WTC11 (cell line): ENCODE measurements at regions of chr19 and their contacts with region 1.

Region 1: GRCh38 chr19:14405758-14406644 is 13.1 kb downstream of the DDX39A start:
- DNase-seq: peak; percentile 100
- ATAC-seq: peak; percentile 92
- H3K4me3 Mint-ChIP-seq: peak overlapping the region; percentile 81
- H3K27ac Mint-ChIP-seq: peak overlapping the region; percentile 98
- H3K4me1 Mint-ChIP-seq: peaks cover 14% of the 10 kb centered on the region
- H3K27me3 Mint-ChIP-seq: no peaks in the 10 kb centered on the region
- CTCF ChIP-seq: peak; percentile 83

Region 2: GRCh38 chr19:14142262-14143190 is 263.5 kb before region 1 on chr19:
- CTCF ChIA-PET with region 1: interaction called, 91 read pairs
- POLR2A ChIA-PET with region 1: no interaction called
- DNase-seq: no peak
- ATAC-seq: no peak
- H3K4me3 Mint-ChIP-seq: no peak overlapping the region
- H3K27ac Mint-ChIP-seq: no peak overlapping the region
- H3K4me1 Mint-ChIP-seq: peaks cover 9% of the 10 kb centered on the region; the same call in 1 of the 2 replicates
- H3K27me3 Mint-ChIP-seq: no peaks in the 10 kb centered on the region; the same call in 1 of the 2 replicates
- CTCF ChIP-seq: no peak

Region 3: DNA sequence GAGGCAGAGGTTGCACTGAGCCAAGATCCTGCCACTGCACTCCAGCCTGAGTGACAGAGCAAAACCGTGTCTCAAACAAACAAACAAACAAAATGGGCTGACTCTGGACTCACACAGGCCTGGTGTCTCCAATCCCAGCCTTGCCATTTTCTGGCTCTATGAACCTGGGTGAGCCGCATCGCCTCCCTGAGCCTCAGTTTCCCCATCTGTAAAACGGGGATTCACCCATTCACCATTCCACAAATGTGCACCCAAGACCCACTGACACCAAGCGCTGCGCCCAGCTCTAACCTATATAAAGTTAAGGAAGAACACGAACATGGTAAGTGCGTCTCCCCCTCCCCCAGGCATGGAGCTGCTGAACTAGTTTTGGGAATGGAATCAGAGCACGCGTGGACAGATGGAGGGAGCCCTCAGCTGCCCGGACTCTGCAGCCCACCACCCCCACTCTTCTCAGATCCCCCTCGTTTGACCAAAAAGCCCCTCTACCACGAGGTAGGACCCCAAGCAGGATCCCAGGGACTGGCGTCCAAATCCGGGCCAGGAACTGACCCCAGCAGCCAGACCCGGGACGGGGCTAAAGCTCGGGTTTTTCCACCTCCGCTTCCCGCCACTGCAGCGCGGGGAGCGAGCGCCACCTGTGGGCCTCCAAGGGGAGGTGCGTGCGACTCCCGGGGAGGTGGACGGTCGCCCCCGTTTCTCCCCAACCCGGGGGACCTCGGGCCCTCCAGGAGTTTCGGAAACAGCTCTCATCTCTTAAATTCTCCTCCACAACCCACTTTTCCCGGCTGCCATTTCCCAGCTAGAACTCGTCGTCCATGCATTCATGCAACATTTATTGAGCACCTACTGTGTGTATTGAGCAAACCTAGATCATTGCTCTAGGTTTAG is 57.8 kb before region 1 on chr19:
- CTCF ChIA-PET with region 1: interaction called, 103 read pairs
- POLR2A ChIA-PET with region 1: interaction called, 6 read pairs
- DNase-seq: peak; percentile 80
- ATAC-seq: peak; percentile 82
- H3K4me3 Mint-ChIP-seq: peak overlapping the region; percentile 45
- H3K27ac Mint-ChIP-seq: no peak overlapping the region
- H3K4me1 Mint-ChIP-seq: peaks cover under 1% of the 10 kb centered on the region
- H3K27me3 Mint-ChIP-seq: peaks cover 9% of the 10 kb centered on the region; the same call in 1 of the 2 replicates
- CTCF ChIP-seq: peak; percentile 93

Region 4: DNA sequence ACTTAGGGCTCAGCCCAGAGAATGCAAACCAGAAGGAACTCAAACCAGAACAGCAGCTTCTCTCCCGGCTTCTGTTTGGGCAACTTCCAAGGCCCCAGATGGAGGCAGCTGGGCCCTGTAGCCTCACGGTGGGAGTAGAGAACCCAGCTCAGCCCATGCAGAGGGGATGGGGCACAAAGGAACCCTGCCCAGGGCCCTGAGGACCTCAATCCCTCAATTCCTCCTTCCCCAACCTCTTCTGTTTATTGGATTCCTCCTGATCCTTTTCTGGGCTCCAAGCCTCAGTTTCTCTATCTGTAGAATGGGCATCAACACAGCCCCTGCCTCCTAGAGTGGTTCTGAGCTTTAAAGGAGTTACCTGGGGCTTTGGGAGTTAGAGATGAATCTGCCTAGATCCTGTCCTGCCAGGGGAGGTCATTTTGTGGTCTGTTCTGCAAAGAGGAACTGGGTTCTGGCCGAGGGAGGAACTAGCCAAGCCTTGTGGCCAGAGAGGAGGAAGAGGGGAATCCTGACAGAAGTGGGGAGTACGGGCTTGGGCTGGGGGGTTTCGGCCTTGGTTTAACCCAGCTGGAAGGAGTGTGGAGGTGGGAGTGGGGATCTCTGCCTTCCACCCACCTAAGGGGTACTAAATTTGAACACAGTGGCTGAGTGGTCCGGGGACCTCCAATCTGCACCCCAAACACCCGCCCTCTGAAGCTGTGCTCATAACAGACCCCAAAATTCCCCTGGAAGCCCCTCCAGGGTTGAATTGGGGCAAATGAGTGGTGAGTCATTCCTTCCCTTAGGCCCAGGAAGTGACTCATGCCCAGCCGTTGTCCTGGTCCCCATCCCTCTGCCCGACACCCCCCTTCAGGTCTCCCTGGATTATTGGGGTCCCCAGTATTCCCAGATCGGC is 22.1 kb before region 1 on chr19:
- CTCF ChIA-PET with region 1: interaction called, 38 read pairs
- POLR2A ChIA-PET with region 1: interaction called, 8 read pairs
- DNase-seq: no peak
- ATAC-seq: no peak
- H3K4me3 Mint-ChIP-seq: no peak overlapping the region
- H3K27ac Mint-ChIP-seq: no peak overlapping the region
- H3K4me1 Mint-ChIP-seq: peaks cover 30% of the 10 kb centered on the region
- H3K27me3 Mint-ChIP-seq: peaks cover 6% of the 10 kb centered on the region
- CTCF ChIP-seq: no peak

Region 5: DNA sequence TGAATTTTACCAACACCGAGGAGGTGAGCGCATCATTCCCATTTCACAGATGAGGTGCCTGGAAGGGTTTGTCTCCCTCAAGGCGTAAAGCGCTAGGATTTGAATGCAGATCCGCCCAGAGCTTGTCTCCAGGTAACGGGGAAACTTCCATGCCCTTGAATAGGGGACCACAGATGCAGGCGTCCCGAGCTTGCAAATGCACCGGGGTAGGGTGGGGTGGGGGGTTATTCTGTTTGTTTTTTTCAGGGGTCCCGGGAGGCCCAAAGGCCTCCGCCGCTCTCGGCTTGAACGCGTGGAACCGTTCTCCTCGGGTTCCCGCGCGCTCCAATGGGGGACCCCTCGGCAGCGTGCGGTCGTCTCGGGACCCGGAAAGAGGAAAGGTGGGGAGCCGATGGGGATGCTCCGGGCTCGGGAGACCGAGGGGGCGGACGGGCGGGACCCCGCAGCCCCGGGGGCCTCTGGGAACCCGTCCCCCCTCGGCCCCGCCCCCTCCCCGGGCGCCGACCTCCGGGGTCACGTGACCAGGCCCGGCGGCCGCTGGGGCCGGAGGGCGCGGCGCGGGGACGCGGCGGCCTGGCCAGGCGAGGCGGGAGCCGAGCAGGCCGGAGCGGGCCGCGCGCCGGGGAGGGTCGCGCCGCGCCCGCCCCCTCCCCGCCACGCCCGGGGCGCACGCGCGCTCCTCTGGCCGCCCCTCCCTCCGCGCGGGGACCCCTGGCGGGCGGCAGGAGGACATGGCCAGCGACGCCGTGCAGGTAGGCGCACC is 27.0 kb after region 1 on chr19 and contains the start of gene PKN1:
- CTCF ChIA-PET with region 1: interaction called, 43 read pairs
- POLR2A ChIA-PET with region 1: interaction called, 3 read pairs
- DNase-seq: peak; percentile 72
- ATAC-seq: peak; percentile 54
- H3K4me3 Mint-ChIP-seq: peak within 1 kb of the TSS; percentile 82
- H3K27ac Mint-ChIP-seq: peak within 1 kb of the TSS; percentile 72
- H3K4me1 Mint-ChIP-seq: peaks cover 7% of the 10 kb centered on the region
- H3K27me3 Mint-ChIP-seq: peaks cover 29% of the 10 kb centered on the region
- CTCF ChIP-seq: no peak
- total RNA-seq, gene PKN1: 170 to 197 TPM (median 187 TPM) in 3 replicates

Region 6: DNA sequence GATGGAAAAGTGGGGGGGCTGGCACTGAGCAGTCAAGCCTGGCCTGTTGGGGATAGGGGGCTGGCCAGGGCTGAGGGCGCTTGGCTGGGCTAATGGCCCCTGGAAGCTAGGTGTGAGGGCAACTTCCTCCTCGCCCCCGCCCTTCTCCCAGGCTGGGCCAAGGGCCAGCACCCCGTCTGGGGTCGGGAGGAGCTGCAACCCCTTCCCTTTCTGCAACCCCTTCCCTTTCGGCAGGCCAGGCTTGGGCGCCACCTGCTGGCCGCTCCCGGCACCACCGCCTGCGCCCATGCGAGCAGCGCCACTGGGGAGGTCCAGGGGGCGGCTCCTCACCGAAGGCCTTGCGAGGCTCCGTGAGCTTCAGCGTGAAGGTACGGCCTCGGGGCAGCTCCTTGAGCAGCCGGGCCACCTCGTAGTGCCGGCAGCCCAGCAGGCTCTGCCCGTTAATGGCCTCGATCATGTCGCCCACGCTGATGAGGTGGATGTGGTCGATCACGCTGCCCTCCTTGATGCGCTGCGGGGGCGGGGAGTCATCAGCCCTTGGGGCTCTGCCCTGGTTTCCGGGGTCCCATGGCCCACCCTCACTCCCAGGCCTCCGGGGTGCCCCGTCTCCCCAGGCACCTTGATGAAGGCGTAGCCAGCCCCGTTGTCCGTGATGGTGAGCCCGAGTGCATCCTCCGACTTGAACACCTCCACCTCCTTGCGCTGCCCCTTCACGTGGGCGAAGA is 74.1 kb after region 1 on chr19:
- CTCF ChIA-PET with region 1: interaction called, 46 read pairs
- POLR2A ChIA-PET with region 1: no interaction called
- DNase-seq: peak; percentile 94
- ATAC-seq: peak; percentile 85
- H3K4me3 Mint-ChIP-seq: no peak overlapping the region
- H3K27ac Mint-ChIP-seq: no peak overlapping the region
- H3K4me1 Mint-ChIP-seq: peaks cover 11% of the 10 kb centered on the region
- H3K27me3 Mint-ChIP-seq: no peaks in the 10 kb centered on the region
- CTCF ChIP-seq: peak; percentile 98